ENCODE measurements at regions of chr21 and their contacts with region 1.

Region 1: DNA sequence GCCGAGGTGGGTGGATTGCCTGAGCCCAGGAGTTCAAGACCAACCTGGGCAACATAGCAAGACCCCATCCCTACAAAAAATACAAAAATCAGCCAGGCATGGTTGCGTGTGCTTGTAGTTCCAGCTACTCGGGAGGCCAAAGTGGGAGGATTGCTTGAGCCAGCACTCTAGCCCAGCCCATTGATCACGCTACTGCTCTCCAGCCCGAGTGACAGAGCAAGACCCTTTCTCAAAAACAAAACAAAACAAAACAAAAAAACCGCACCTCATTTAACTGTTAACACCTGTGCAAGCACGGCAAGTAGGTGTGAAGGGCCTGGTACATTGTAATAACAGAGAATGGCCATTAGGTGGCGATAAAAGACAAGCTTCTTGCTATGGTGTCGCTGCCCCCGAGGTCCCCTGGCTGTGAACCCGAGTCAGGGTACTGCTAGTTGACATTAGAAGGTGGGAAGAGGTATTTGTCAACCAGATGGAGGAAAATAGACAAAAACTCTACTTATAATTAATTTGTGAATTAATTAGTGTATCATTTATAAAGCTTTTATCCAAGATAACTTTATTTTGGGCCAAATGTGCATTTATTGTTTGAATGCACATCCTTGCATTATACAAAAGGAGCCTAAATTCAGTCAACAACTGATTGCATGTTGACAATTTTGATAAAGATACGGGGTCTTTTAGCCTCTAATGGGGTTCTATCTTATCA is 66.5 kb downstream of the SH3BGR start:
- DNase-seq: peak in 2 of 3 donors; percentile 42 to 53
- ATAC-seq: peak; percentile 91
- H3K4me3 ChIP-seq: no peak overlapping the region
- H3K4me1 ChIP-seq: no peaks in the 10 kb centered on the region
- CTCF ChIP-seq: peak; percentile 70

Region 2: DNA sequence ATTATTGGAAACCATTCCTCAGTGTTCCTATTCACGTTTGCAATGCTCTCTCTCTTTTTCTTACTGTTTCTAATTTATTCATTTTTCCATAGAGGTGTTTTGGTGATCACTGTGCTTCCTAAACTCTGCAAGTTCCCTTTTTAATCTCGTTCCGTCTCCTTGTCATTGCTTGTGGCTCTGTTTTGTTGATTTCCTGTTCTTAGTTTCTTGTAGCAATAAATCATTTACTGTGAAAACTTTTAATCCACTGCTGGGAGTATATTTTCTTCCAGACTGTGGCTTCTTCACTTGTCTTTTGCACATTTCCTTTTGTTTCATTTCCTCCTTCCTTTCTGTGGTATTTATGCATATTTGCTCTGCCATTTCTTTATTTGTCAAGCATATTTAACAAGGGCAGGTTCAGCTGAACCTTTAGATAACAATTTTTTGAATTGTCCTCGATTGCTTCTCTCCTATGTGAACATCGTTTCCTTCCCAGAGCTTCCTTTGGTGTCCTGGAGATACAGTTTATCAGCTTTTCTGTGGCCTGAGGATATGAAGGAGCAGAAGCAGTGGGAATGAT is 98.0 kb after region 1 on chr21:
- intact Hi-C with region 1: no loop called
- DNase-seq: no peak
- ATAC-seq: peak; percentile 80
- H3K4me3 ChIP-seq: no peak overlapping the region
- H3K4me1 ChIP-seq: no peaks in the 10 kb centered on the region
- CTCF ChIP-seq: no peak

Region 3: DNA sequence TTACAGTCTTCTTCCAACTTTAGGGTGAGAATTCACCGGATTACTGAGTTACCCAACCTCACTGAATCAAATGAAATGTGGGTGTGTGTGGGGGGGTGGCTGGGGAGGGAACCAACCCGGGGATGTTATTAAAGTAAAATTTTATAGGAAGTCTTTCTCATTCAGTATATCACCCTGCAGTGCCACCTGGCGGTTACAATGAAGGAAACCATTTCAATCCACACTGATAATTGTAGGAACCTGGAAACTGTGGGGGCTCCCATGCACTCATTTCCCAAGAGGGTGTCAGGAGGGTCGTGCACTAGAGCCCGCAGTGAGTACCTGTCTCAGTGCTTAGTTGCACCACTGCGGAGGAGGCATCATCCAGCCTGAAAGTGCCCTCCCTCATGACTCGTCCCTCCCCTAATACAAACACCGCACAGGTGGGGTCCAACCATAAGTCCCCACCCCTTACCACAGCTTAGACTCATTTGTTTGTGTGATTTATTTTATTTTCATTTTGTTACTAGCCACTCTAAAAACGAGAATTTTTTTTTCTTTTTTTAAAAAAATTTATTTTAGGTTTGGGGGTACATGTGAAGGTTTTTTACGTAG is 197.6 kb after region 1 on chr21:
- intact Hi-C with region 1: loop called (anchors 5 kb)
- DNase-seq: peak in 2 of 3 donors; percentile 33 to 82
- ATAC-seq: peak; percentile 65
- H3K4me3 ChIP-seq: no peak overlapping the region
- H3K4me1 ChIP-seq: peaks cover 4% of the 10 kb centered on the region
- CTCF ChIP-seq: no peak

Measured in mucosa of descending colon (tissue), 3 donors.